Spleen (tissue), 13 donors: ENCODE measurements at regions of chr17 and their contacts with region 1.

Region 1: GRCh38 chr17:1516388-1517161 is at the start of gene INPP5K:
- DNase-seq: peak; percentile 100
- H3K4me3 ChIP-seq: peak within 1 kb of the TSS; percentile 92 to 99 (median 96)
- H3K27ac ChIP-seq: peak within 1 kb of the TSS; percentile 84 to 98 (median 96)
- H3K4me1 ChIP-seq: peaks cover 16 to 64% (median 38%) of the 10 kb centered on the region in 6 donors
- H3K27me3 ChIP-seq: no peaks in the 10 kb centered on the region
- CTCF ChIP-seq: peak in 5 of 11 experiments; percentile 3 to 44 (median 24)
- POLR2A ChIP-seq: peak in 2 of 3 donors; percentile 16 to 27
- total RNA-seq, gene INPP5K: 43.1 to 107 (median 55.2) TPM

Region 2: DNA sequence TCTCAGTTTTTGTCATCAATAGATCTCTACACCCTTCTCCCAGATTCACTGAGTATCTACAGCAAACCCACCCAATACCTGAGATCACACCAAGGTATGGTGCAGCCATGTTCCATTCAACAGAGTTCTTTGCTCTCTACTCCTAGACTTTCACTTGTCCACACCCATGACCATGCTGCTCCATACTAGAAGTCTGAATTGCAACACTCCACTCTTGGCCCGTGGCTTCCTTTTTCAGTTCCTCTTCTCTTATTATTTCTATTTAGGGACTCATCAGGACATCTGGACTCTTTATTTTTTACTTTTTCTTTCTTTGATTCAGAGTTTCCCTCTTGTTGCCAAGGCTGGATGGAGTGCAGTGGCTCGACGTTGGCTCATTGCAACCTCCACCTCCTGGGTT is 153.6 kb before region 1 on chr17:
- intact Hi-C with region 1: loop called (anchors 5 kb)
- DNase-seq: no peak
- H3K4me3 ChIP-seq: peak overlapping the region in 2 of 8 donors; percentile 7 to 39
- H3K27ac ChIP-seq: peak overlapping the region in 7 of 8 donors; percentile 6 to 73 (median 69)
- H3K4me1 ChIP-seq: peaks cover 57 to 94% (median 79%) of the 10 kb centered on the region in 6 donors
- H3K27me3 ChIP-seq: no peaks in the 10 kb centered on the region
- CTCF ChIP-seq: no peak
- POLR2A ChIP-seq: no peak

Region 3: GRCh38 chr17:1460233-1460632 is 56.3 kb before region 1 on chr17:
- intact Hi-C with region 1: loop called (anchors 10 kb)
- DNase-seq: no peak
- H3K4me3 ChIP-seq: no peak overlapping the region
- H3K27ac ChIP-seq: peak overlapping the region in 1 of 8 donors; percentile 4
- H3K4me1 ChIP-seq: peaks cover 22 to 65% (median 49%) of the 10 kb centered on the region in 6 donors
- H3K27me3 ChIP-seq: peaks cover 0 to 38% (median 0%) of the 10 kb centered on the region in 7 donors
- CTCF ChIP-seq: no peak
- POLR2A ChIP-seq: no peak